Caco-2 (cell line): ENCODE measurements at regions of chr9 and their contacts with region 1.

Region 1: GRCh38 chr9:68698943-68699509 is 6.0 kb upstream of the PIP5K1B start:
- DNase-seq: no peak
- H3K4me3 ChIP-seq: no peak overlapping the region
- H3K4me3 Mint-ChIP-seq: no peak overlapping the region
- H3K27ac Mint-ChIP-seq: no peak overlapping the region
- H3K4me1 ChIP-seq: no peaks in the 10 kb centered on the region
- H3K4me1 Mint-ChIP-seq: no peaks in the 10 kb centered on the region
- H3K27me3 ChIP-seq: no peaks in the 10 kb centered on the region
- H3K27me3 Mint-ChIP-seq: no peaks in the 10 kb centered on the region
- CTCF ChIP-seq: no peak

Region 2: GRCh38 chr9:68685770-68686169 is 13.3 kb before region 1 on chr9:
- CTCF ChIA-PET with region 1: no interaction called
- POLR2A ChIA-PET with region 1: no interaction called
- intact Hi-C with region 1: no loop called
- DNase-seq: peak in 1 of 2 experiments; percentile 1
- H3K4me3 ChIP-seq: no peak overlapping the region
- H3K4me3 Mint-ChIP-seq: no peak overlapping the region
- H3K27ac Mint-ChIP-seq: no peak overlapping the region
- H3K4me1 ChIP-seq: no peaks in the 10 kb centered on the region
- H3K4me1 Mint-ChIP-seq: no peaks in the 10 kb centered on the region
- H3K27me3 ChIP-seq: no peaks in the 10 kb centered on the region
- H3K27me3 Mint-ChIP-seq: peaks cover 3% of the 10 kb centered on the region
- CTCF ChIP-seq: peak in 1 of 2 experiments; percentile 21

Region 3: GRCh38 chr9:68747043-68747533 is 48.1 kb after region 1 on chr9:
- CTCF ChIA-PET with region 1: no interaction called
- POLR2A ChIA-PET with region 1: no interaction called
- intact Hi-C with region 1: no loop called
- DNase-seq: peak; percentile 26 to 72
- H3K4me3 ChIP-seq: no peak overlapping the region
- H3K4me3 Mint-ChIP-seq: no peak overlapping the region
- H3K27ac Mint-ChIP-seq: peak overlapping the region; percentile 73
- H3K4me1 ChIP-seq: peaks cover 9% of the 10 kb centered on the region; the same call in 1 of the 2 replicates
- H3K4me1 Mint-ChIP-seq: peaks cover 7% of the 10 kb centered on the region
- H3K27me3 ChIP-seq: no peaks in the 10 kb centered on the region
- H3K27me3 Mint-ChIP-seq: no peaks in the 10 kb centered on the region
- CTCF ChIP-seq: no peak

Region 4: DNA sequence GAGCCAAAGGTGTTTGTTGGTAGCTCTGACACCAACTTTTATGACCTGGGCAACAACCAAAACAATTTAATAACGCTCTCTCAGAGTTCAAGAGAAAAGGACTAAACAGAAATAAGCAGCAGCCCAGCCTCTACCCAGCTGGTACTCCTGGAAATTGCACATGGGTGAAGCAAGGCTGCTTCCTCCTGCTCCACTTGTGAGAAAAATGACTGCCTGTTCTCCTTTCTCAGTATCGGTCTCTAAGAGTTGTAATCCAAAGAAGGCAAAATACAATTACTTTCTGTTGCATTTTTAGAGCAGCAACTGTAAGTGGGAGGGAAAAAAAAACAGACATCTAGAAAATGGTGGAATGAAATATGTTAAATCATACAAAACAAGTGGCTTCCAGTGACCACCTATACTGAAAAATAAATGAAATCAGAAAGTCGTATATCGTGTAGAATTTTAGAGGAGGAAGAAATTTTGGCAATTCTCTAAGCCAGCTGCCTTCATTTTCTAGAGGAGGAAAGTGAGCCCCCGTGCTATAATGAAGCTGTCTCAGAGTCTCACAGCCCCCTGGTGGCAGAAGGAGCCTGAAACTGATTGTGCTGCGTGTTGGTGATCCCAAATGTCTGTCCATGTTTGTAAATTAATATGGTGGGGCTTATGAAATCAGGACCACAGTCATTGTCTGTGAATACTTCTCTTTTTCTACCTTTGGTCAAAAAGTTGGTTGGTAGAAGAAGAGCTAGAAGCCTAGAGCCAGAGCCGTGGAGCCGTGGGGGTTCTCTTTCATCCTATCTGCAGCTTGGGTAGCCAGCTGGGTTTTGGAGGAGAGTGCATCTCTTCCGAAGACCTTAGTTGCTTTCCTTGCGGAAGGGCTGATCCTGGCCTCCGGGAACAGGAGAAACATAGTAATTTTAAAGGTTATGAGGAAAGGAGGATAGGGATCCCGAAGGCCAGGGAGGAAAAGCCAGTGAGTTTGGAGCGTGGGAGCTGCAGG is 145.9 kb after region 1 on chr9:
- CTCF ChIA-PET with region 1: no interaction called
- POLR2A ChIA-PET with region 1: no interaction called
- intact Hi-C with region 1: loop called (anchors 5 kb)
- DNase-seq: peak; percentile 3 to 25
- H3K4me3 ChIP-seq: no peak overlapping the region
- H3K4me3 Mint-ChIP-seq: no peak overlapping the region
- H3K27ac Mint-ChIP-seq: peak overlapping the region; percentile 29
- H3K4me1 ChIP-seq: no peaks in the 10 kb centered on the region
- H3K4me1 Mint-ChIP-seq: no peaks in the 10 kb centered on the region
- H3K27me3 ChIP-seq: no peaks in the 10 kb centered on the region
- H3K27me3 Mint-ChIP-seq: no peaks in the 10 kb centered on the region
- CTCF ChIP-seq: peak in 1 of 2 experiments; percentile 24